ENCODE measurements at regions of chr15 and their contacts with region 1.

Region 1: GRCh38 chr15:83108266-83109226 is 1.1 kb downstream of the TM6SF1 start:
- DNase-seq: peak; percentile 90
- H3K4me3 ChIP-seq: peak overlapping the region; percentile 55 to 77 (median 56)
- H3K27ac ChIP-seq: peak overlapping the region; percentile 95
- H3K4me1 ChIP-seq: peaks cover 56% of the 10 kb centered on the region
- H3K27me3 ChIP-seq: no peaks in the 10 kb centered on the region
- CTCF ChIP-seq: no peak
- POLR2A ChIP-seq: peak; percentile 60

Region 2: GRCh38 chr15:82540055-82540983 is 568.2 kb before region 1 on chr15 and contains the start of gene RPS17:
- CTCF ChIA-PET with region 1: interaction called, 3 read pairs
- POLR2A ChIA-PET with region 1: interaction called, 3 read pairs
- dilution Hi-C with region 1: no loop called
- intact Hi-C with region 1: loop called (anchors 5 kb)
- DNase-seq: peak; percentile 94
- H3K4me3 ChIP-seq: peak within 1 kb of the TSS; percentile 73 to 87 (median 86)
- H3K27ac ChIP-seq: peak within 1 kb of the TSS; percentile 56
- H3K4me1 ChIP-seq: peaks cover 17% of the 10 kb centered on the region
- H3K27me3 ChIP-seq: peaks cover 4 to 11% of the 10 kb centered on the region in 2 experiments
- CTCF ChIP-seq: peak; percentile 100
- POLR2A ChIP-seq: peak; percentile 99
- total RNA-seq, gene RPS17: 1,599 and 1,690 TPM in 2 replicates

Region 3: DNA sequence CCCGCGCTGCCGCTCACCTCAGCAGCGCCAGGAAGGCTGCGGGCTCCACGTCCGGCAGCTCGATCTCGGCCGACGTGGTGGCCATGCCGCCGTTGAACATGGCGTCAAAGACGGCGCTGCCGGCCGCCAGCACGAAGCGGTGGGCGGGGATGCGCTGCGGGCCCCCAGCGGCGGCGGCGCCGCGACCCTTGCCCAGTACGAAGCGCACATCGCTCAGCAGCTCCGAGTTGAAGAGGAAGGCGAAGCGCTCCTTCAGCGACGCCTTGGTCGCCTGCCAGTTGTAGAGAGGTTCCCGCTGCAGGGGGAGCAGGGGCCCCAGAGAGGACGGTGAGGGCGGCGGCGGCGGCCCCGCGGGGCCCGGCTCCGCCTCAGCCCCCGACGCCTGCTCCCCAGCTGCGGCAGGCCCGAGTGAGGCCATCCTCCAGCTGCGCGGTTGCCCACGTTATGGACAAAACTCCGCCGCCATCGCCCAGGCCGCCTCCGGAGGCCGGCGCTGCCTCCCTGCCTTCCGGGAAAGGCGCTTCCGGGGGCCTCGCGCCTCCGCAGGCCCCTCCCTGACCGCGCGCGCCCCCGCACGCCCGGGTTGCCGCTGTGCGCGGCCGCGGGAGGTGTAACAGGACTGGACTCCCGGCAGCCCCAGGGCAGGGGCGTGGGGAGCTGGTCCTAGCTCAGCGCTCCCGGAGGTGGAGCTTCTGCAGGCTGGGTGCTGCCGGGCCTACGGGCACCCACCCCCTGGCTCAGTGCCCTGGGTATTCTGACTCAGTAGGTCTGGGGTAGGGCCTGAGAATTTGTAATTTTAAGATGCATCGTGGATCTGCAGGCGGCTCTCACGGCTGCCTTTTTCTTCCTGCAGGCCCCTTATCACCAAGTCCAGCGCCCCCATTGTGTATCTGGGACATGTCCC is 41.6 kb before region 1 on chr15 and contains the start of gene BTBD1:
- CTCF ChIA-PET with region 1: interaction called, 8 read pairs
- POLR2A ChIA-PET with region 1: no interaction called
- dilution Hi-C with region 1: no loop called
- intact Hi-C with region 1: loop called (anchors 1 kb)
- DNase-seq: peak; percentile 93
- H3K4me3 ChIP-seq: peak within 1 kb of the TSS; percentile 75 to 99 (median 98)
- H3K27ac ChIP-seq: peak within 1 kb of the TSS; percentile 66
- H3K4me1 ChIP-seq: peaks cover 36% of the 10 kb centered on the region
- H3K27me3 ChIP-seq: no peaks in the 10 kb centered on the region
- CTCF ChIP-seq: peak in 1 of 2 donors; percentile 14
- POLR2A ChIP-seq: peak; percentile 95
- total RNA-seq, gene BTBD1: 56.9 and 58.0 TPM in 2 replicates

Region 4: DNA sequence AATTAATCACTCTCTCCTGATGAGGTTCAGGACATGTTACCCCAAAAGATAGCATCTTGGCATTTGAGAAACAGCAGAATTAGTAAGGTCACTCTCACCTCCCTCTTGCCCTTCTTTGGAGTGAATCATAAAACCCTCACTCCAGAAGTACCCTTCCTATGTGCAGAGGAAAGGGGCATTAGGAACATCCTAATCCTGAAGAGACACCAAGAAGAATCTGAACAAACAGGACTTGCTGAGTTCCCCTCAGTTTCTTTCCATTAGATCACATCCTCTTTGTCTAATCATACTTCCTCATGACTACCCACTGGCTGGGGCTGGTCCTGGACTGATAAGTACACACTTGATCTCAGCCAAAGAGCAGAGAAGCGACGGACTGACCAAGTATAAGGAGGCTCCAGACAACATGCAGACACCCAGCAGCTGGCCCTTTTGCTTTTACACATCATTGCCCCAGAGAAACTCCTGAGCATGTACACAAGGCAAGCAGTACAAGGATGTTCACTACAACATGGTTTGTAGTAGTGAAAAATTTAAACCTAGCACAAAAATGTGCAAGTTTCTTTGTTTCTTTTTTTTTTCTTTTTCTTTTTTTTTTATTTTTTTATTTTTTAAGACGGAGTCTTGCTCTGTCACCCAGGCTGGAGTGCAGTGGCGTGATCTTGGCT is 16.1 kb before region 1 on chr15:
- CTCF ChIA-PET with region 1: interaction called, 4 read pairs
- POLR2A ChIA-PET with region 1: interaction called, 4 read pairs
- dilution Hi-C with region 1: no loop called
- intact Hi-C with region 1: loop called (anchors 1 kb)
- DNase-seq: peak; percentile 95
- H3K4me3 ChIP-seq: no peak overlapping the region
- H3K27ac ChIP-seq: peak overlapping the region; percentile 93
- H3K4me1 ChIP-seq: peaks cover 12% of the 10 kb centered on the region
- H3K27me3 ChIP-seq: no peaks in the 10 kb centered on the region
- CTCF ChIP-seq: no peak
- POLR2A ChIP-seq: peak; percentile 84

Region 5: GRCh38 chr15:83153288-83153687 is 44.7 kb after region 1 on chr15:
- CTCF ChIA-PET with region 1: no interaction called
- POLR2A ChIA-PET with region 1: no interaction called
- dilution Hi-C with region 1: no loop called
- intact Hi-C with region 1: no loop called
- DNase-seq: no peak
- H3K4me3 ChIP-seq: no peak overlapping the region
- H3K27ac ChIP-seq: no peak overlapping the region
- H3K4me1 ChIP-seq: no peaks in the 10 kb centered on the region
- H3K27me3 ChIP-seq: no peaks in the 10 kb centered on the region
- CTCF ChIP-seq: no peak
- POLR2A ChIP-seq: no peak

Region 6: DNA sequence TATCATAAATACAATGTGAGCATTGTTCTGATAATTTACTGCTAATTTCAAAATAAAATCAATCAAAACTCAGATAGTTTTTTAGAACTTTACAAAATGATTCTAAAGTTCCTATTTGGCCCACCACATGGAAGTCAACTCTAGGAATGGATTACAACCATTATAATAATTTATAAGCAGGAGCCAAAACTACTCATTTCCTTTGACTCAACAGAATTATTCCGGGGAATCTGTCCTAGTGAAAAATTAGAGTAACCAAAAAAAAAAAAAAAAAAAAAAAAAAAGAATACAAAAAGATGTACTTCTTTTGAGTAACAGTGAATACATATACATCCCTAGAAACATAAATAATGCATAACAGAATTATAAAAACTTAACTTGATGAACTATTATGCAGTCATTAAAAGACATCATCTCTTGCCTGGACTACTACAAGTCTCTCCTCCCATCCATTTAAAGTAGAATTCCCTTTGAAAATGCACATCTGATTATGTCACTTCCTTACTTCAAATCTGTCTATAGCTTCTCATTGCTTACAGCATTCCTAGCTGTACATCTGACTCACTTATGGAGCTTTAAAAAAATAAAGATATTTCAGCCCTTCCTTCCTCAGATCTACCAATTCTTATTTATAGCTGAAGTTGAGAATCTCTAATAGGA is 55.7 kb after region 1 on chr15:
- CTCF ChIA-PET with region 1: no interaction called
- POLR2A ChIA-PET with region 1: no interaction called
- dilution Hi-C with region 1: no loop called
- intact Hi-C with region 1: loop called (anchors 1 kb)
- DNase-seq: peak; percentile 80
- H3K4me3 ChIP-seq: peak overlapping the region in 1 of 3 experiments; percentile 49
- H3K27ac ChIP-seq: peak overlapping the region; percentile 89
- H3K4me1 ChIP-seq: peaks cover 44% of the 10 kb centered on the region
- H3K27me3 ChIP-seq: no peaks in the 10 kb centered on the region
- CTCF ChIP-seq: no peak
- POLR2A ChIP-seq: no peak